Cardiac septum (tissue), 1 donor: ENCODE measurements at regions of chr14 and their contacts with region 1.

Region 1: DNA sequence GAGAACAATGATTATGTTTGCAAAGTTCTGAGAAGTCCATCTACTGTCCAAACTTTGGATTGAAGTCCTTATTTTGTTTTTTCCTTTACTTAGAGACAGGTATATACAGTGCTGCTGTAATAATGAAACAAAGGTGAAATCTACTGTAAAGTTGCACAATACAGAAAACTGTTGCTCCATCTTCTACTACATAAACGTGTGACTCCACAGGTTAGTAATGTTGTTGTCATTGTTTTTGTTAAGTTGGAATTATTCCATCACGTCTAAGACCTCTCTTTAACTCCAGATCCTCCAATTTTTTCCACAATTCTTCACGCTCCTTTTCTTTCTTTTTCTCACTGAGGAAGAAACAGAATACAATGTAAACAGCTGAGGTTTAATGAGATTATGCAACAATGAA is 57.0 kb upstream of the GPHB5 start:
- DNase-seq: no peak

Region 2: GRCh38 chr14:63174760-63175211 is 201.0 kb before region 1 on chr14:
- intact Hi-C with region 1: loop called (anchors 10 kb)
- DNase-seq: no peak